Activated CD8-positive, alpha-beta T cell treated with anti-CD3 and anti-CD28 coated beads, Interleukin-2, amount 10 ng/mL, durations not matched to agents 7 days and 5 days (primary cell): ENCODE measurements at regions of chr1 and their contacts with region 1.

Region 1: DNA sequence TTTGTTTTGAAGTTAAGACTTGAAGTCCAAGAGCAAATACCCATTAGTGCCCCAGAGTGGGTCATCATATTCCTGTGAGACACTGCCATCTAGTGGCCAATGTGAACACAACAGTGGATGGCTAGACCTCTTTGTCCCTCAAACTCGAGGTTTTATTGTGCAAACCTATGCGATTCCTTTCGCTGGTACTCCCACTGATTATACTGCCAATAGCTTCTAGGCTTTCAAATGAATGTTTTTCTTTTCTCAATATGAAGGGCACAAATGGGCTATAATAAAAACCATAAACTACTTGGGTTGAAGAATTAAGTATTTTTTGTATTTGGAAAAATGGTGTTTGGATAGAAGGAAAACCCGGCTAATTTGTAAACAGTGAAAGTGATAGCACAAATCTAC is 100.4 kb upstream of the ZNF281 start:
- DNase-seq: peak; percentile 78
- ATAC-seq: peak; percentile 95
- H3K4me3 Mint-ChIP-seq: no peak overlapping the region
- H3K27ac Mint-ChIP-seq: no peak overlapping the region
- H3K4me1 Mint-ChIP-seq: peaks cover 2% of the 10 kb centered on the region
- H3K27me3 Mint-ChIP-seq: peaks cover 13% of the 10 kb centered on the region

Region 2: GRCh38 chr1:200491097-200491496 is 19.1 kb before region 1 on chr1:
- CTCF ChIA-PET with region 1: interaction called, 12 read pairs
- POLR2A ChIA-PET with region 1: no interaction called
- DNase-seq: no peak
- ATAC-seq: no peak
- H3K4me3 Mint-ChIP-seq: no peak overlapping the region
- H3K27ac Mint-ChIP-seq: no peak overlapping the region
- H3K4me1 Mint-ChIP-seq: no peaks in the 10 kb centered on the region
- H3K27me3 Mint-ChIP-seq: peaks cover 25% of the 10 kb centered on the region

Region 3: DNA sequence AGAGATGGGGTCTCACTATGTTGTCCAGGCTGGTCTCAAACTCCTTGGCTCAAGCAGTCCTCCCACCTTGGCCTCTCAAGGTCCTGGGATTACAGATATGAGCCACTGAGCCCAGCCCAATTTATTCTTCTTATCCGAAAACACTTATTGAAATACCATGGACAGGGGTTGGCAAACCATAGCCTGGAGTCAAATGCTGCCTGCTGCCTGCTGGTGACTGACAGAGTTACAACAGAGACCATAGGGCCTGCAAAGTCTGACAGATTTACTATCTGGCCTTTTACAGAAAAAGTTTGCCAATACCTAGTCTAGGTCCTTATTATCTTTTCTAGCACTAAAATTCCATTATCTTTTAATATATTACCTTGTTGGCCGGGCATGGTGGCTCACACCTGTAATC is 13.3 kb before region 1 on chr1:
- CTCF ChIA-PET with region 1: interaction called, 22 read pairs
- POLR2A ChIA-PET with region 1: no interaction called
- DNase-seq: no peak
- ATAC-seq: no peak
- H3K4me3 Mint-ChIP-seq: no peak overlapping the region
- H3K27ac Mint-ChIP-seq: no peak overlapping the region
- H3K4me1 Mint-ChIP-seq: no peaks in the 10 kb centered on the region
- H3K27me3 Mint-ChIP-seq: peaks cover 14% of the 10 kb centered on the region